CD4-positive, alpha-beta T cell (primary cell): ENCODE measurements at regions of chr4 and their contacts with region 1.

Region 1: GRCh38 chr4:81844717-81845116 is 373.0 kb upstream of the RASGEF1B start:
- DNase-seq: peak; percentile 38 to 82 (median 58)
- ATAC-seq: peak; percentile 95
- H3K4me3 ChIP-seq: no peak overlapping the region
- H3K4me3 Mint-ChIP-seq: no peak overlapping the region
- H3K27ac ChIP-seq: no peak overlapping the region
- H3K27ac Mint-ChIP-seq: no peak overlapping the region
- H3K4me1 ChIP-seq: no peaks in the 10 kb centered on the region
- H3K4me1 Mint-ChIP-seq: no peaks in the 10 kb centered on the region
- H3K27me3 ChIP-seq: no peaks in the 10 kb centered on the region
- H3K27me3 Mint-ChIP-seq: no peaks in the 10 kb centered on the region
- CTCF ChIP-seq: peak; percentile 77

Region 2: GRCh38 chr4:81505004-81505598 is 339.6 kb before region 1 on chr4:
- CTCF ChIA-PET with region 1: no interaction called
- POLR2A ChIA-PET with region 1: no interaction called
- intact Hi-C with region 1: loop called in 1 of 2 experiments (anchors 1 kb)
- DNase-seq: peak; percentile 27 to 85 (median 58)
- ATAC-seq: peak; percentile 89
- H3K4me3 ChIP-seq: no peak overlapping the region
- H3K4me3 Mint-ChIP-seq: peak overlapping the region; percentile 52
- H3K27ac ChIP-seq: peak overlapping the region; percentile 47 to 71
- H3K27ac Mint-ChIP-seq: peak overlapping the region; percentile 89
- H3K4me1 ChIP-seq: peaks cover 30% of the 10 kb centered on the region
- H3K4me1 Mint-ChIP-seq: peaks cover 32% of the 10 kb centered on the region
- H3K27me3 ChIP-seq: no peaks in the 10 kb centered on the region
- H3K27me3 Mint-ChIP-seq: no peaks in the 10 kb centered on the region
- CTCF ChIP-seq: no peak

Region 3: DNA sequence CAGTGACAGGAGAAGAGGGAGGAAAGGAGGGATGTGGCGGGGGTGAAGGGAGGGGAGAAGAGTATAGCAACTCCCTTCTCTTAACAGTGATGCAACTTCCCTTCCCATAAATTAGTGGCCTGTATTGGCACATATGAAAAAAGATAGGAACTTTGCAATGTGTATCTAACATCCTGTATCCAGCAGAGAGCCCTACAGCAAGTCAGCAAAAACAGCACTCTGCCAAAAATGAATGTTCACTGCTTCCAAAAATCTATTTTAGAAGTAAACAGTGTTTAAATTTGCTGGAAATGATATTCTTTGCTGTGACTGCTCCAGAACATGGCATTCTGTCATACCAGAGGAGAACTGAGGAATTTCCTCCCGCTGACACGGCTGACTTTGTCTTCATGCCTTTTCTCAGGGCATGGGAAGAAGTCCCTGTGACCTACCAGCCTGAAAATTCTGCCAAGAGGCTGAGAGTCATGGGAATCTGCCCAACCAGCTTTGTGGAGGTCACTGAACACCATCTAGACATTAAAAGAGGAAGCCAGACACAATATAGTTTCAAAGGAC is 29.7 kb before region 1 on chr4:
- CTCF ChIA-PET with region 1: no interaction called
- POLR2A ChIA-PET with region 1: no interaction called
- intact Hi-C with region 1: no loop called
- DNase-seq: no peak
- ATAC-seq: no peak
- H3K4me3 ChIP-seq: no peak overlapping the region
- H3K4me3 Mint-ChIP-seq: no peak overlapping the region
- H3K27ac ChIP-seq: no peak overlapping the region
- H3K27ac Mint-ChIP-seq: no peak overlapping the region
- H3K4me1 ChIP-seq: no peaks in the 10 kb centered on the region
- H3K4me1 Mint-ChIP-seq: no peaks in the 10 kb centered on the region
- H3K27me3 ChIP-seq: peaks cover 0 to 4% of the 10 kb centered on the region in 2 experiments
- H3K27me3 Mint-ChIP-seq: peaks cover under 1% of the 10 kb centered on the region
- CTCF ChIP-seq: no peak

Region 4: DNA sequence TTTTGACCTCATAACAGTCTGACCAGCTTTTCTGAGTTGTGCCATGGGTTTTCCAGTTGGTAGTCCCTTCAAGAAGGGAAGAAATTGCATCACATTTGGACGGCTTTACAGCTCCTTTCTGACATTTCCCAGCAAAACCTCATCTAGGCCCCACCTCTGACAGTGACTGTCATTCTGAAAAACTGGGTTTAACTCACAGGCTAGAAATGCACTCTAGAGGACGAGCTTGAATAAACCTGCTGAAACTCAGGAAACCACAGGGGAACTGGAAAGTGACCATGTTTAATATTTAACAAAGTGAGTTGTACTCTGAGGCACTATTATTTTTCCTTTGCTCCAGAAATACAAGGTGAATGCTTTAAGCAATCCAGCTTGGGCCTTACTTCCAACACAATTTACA is 61.3 kb after region 1 on chr4:
- CTCF ChIA-PET with region 1: no interaction called
- POLR2A ChIA-PET with region 1: no interaction called
- intact Hi-C with region 1: no loop called
- DNase-seq: no peak
- ATAC-seq: no peak
- H3K4me3 ChIP-seq: no peak overlapping the region
- H3K4me3 Mint-ChIP-seq: no peak overlapping the region
- H3K27ac ChIP-seq: no peak overlapping the region
- H3K27ac Mint-ChIP-seq: no peak overlapping the region
- H3K4me1 ChIP-seq: no peaks in the 10 kb centered on the region
- H3K4me1 Mint-ChIP-seq: no peaks in the 10 kb centered on the region
- H3K27me3 ChIP-seq: peaks cover 0 to 6% of the 10 kb centered on the region in 2 experiments
- H3K27me3 Mint-ChIP-seq: no peaks in the 10 kb centered on the region
- CTCF ChIP-seq: no peak

Region 5: DNA sequence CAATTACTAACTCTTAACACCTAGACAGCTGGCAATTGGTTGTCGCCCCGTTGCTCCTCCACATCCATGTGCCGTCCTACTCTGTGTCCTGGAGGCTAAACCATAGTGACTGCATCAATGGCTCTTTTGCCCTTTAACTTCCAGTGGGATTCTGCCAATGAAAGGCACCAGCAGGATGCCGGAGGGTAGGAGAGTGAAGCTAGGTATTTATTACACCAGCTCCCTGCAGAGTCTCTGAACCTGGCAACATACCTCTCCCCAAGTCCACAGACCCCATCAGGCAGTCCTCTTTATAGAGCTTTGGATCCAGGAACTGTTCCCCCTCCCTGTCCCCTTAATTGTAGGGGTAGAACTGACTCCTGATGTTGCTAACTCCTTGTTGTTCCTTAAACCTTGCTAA is 102.3 kb after region 1 on chr4:
- CTCF ChIA-PET with region 1: no interaction called
- POLR2A ChIA-PET with region 1: no interaction called
- intact Hi-C with region 1: no loop called
- DNase-seq: no peak
- ATAC-seq: no peak
- H3K4me3 ChIP-seq: no peak overlapping the region
- H3K4me3 Mint-ChIP-seq: no peak overlapping the region
- H3K27ac ChIP-seq: no peak overlapping the region
- H3K27ac Mint-ChIP-seq: no peak overlapping the region
- H3K4me1 ChIP-seq: no peaks in the 10 kb centered on the region
- H3K4me1 Mint-ChIP-seq: no peaks in the 10 kb centered on the region
- H3K27me3 ChIP-seq: no peaks in the 10 kb centered on the region
- H3K27me3 Mint-ChIP-seq: peaks cover 8% of the 10 kb centered on the region
- CTCF ChIP-seq: no peak

Region 6: DNA sequence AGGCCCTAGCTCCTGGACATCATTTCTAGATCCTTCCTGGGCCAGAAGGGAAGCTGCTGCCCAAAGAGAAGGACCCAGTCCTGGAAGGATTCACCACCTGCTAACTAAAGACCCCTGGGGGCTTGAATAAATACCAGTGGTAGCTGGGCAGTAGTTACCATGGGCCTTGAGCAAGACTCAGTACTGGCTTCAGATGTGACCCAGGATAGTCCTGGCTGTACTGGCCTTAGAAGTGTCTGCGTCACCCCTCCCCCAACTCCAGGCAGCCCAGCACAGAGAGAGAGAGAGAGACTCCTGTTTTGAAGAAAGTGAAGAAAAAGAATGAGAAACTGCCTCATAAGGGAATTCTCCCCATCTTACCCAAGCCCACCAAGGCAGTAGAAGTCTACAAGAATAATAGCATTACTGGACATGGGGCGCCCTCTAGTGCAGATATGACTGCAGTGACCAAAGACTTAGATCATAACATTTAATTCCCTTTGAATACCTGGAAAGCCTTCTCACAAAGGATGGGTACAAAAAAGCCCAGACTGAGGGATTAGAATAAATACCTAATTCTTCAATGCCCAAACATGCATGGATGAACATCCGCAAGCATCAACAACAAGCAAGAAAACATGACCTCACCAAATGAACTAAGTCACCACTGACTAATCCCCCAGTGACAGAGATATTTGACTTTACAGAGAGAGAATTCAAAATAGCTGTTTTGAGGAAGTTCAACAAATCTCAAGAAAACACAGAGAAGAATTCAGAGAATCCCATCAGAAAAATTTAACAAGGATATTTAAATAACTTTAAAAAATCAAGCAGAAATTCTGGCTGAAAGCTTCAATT is 357.3 kb after region 1 on chr4:
- CTCF ChIA-PET with region 1: no interaction called
- POLR2A ChIA-PET with region 1: no interaction called
- intact Hi-C with region 1: loop called (anchors 5 kb)
- DNase-seq: peak in 13 of 14 experiments; percentile 5 to 72 (median 34)
- ATAC-seq: peak; percentile 65
- H3K4me3 ChIP-seq: no peak overlapping the region
- H3K4me3 Mint-ChIP-seq: no peak overlapping the region
- H3K27ac ChIP-seq: no peak overlapping the region
- H3K27ac Mint-ChIP-seq: no peak overlapping the region
- H3K4me1 ChIP-seq: peaks cover 5% of the 10 kb centered on the region
- H3K4me1 Mint-ChIP-seq: peaks cover 10% of the 10 kb centered on the region
- H3K27me3 ChIP-seq: no peaks in the 10 kb centered on the region
- H3K27me3 Mint-ChIP-seq: peaks cover 8% of the 10 kb centered on the region
- CTCF ChIP-seq: peak; percentile 62

Region 7: GRCh38 chr4:82268050-82268825 is 423.5 kb after region 1 on chr4:
- CTCF ChIA-PET with region 1: no interaction called
- POLR2A ChIA-PET with region 1: no interaction called
- intact Hi-C with region 1: loop called (anchors 5 kb)
- DNase-seq: peak in 12 of 14 experiments; percentile 12 to 76 (median 34)
- ATAC-seq: peak; percentile 92
- H3K4me3 ChIP-seq: no peak overlapping the region
- H3K4me3 Mint-ChIP-seq: peak overlapping the region; percentile 70
- H3K27ac ChIP-seq: no peak overlapping the region
- H3K27ac Mint-ChIP-seq: peak overlapping the region; percentile 11
- H3K4me1 ChIP-seq: peaks cover 18% of the 10 kb centered on the region
- H3K4me1 Mint-ChIP-seq: peaks cover 34% of the 10 kb centered on the region
- H3K27me3 ChIP-seq: no peaks in the 10 kb centered on the region
- H3K27me3 Mint-ChIP-seq: no peaks in the 10 kb centered on the region
- CTCF ChIP-seq: peak; percentile 91